Activated CD4-positive, alpha-beta memory T cell treated with anti-CD3 and anti-CD28 coated beads for 36 hours (primary cell): ENCODE measurements at regions of chr1 and their contacts with region 1.

Region 1: DNA sequence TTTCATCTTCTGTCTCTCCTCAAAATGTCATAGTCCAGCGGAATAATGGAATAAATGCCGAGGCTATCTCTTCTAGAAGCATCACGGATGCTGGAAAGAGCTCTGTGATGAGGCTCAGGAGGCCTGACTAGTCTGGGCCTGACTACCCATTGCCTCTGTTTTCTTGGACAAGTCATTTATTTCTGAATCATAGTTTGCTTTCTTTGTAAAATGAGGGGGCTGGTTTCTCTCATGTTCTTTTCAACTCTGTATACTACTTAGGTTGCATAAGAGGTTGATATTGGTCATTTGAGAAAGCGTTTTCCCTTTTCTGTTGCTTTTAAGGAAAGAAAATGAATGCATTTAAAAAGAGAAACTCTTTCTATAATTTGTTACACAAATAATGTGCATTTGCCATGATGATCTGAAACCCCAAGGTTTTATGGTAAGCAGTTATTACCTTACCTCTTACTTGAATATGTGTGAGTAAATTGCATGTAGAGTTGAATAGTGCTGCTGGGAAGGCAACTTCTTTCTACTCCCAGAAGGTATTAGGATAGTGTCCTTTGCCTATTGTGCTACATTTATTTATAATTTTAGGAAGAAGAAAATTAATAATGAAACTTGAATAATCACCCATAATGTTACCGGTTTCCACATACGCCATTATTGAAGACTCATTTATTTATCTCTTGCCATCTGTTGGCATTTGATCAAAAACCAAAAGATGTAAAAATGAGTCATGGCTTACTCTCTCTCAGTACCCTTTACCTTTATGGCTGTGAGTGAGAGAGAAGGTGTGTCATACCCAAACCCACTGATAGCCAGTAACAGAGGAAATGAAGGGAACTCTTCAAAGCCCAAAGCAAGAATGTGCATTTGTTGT is 179.1 kb downstream of the FASLG start:
- DNase-seq: peak; percentile 15
- H3K4me3 Mint-ChIP-seq: no peak overlapping the region
- H3K27ac Mint-ChIP-seq: no peak overlapping the region
- H3K4me1 Mint-ChIP-seq: peaks cover 27% of the 10 kb centered on the region
- H3K27me3 Mint-ChIP-seq: peaks cover 33% of the 10 kb centered on the region

Region 2: GRCh38 chr1:172699111-172699510 is 138.9 kb before region 1 on chr1:
- CTCF ChIA-PET with region 1: no interaction called
- POLR2A ChIA-PET with region 1: no interaction called
- intact Hi-C with region 1: loop called (anchors 1 kb)
- DNase-seq: peak; percentile 86
- H3K4me3 Mint-ChIP-seq: peak overlapping the region; percentile 14
- H3K27ac Mint-ChIP-seq: peak overlapping the region; percentile 88
- H3K4me1 Mint-ChIP-seq: peaks cover 50% of the 10 kb centered on the region
- H3K27me3 Mint-ChIP-seq: no peaks in the 10 kb centered on the region

Region 3: GRCh38 chr1:172795741-172796140 is 42.3 kb before region 1 on chr1:
- CTCF ChIA-PET with region 1: no interaction called
- POLR2A ChIA-PET with region 1: no interaction called
- intact Hi-C with region 1: no loop called
- DNase-seq: no peak
- H3K4me3 Mint-ChIP-seq: no peak overlapping the region
- H3K27ac Mint-ChIP-seq: no peak overlapping the region
- H3K4me1 Mint-ChIP-seq: no peaks in the 10 kb centered on the region
- H3K27me3 Mint-ChIP-seq: peaks cover 3% of the 10 kb centered on the region

Region 4: GRCh38 chr1:172818841-172819527 is 19.1 kb before region 1 on chr1:
- CTCF ChIA-PET with region 1: no interaction called
- POLR2A ChIA-PET with region 1: no interaction called
- intact Hi-C with region 1: loop called (anchors 1 kb)
- DNase-seq: peak; percentile 69
- H3K4me3 Mint-ChIP-seq: peak overlapping the region; percentile 4
- H3K27ac Mint-ChIP-seq: peak overlapping the region; percentile 63
- H3K4me1 Mint-ChIP-seq: peaks cover 24% of the 10 kb centered on the region
- H3K27me3 Mint-ChIP-seq: peaks cover 11% of the 10 kb centered on the region

Region 5: GRCh38 chr1:172883107-172883791 is 45.2 kb after region 1 on chr1:
- CTCF ChIA-PET with region 1: no interaction called
- POLR2A ChIA-PET with region 1: no interaction called
- intact Hi-C with region 1: loop called (anchors 1 kb)
- DNase-seq: peak; percentile 48
- H3K4me3 Mint-ChIP-seq: no peak overlapping the region
- H3K27ac Mint-ChIP-seq: no peak overlapping the region
- H3K4me1 Mint-ChIP-seq: peaks cover 15% of the 10 kb centered on the region
- H3K27me3 Mint-ChIP-seq: peaks cover 33% of the 10 kb centered on the region

Region 6: DNA sequence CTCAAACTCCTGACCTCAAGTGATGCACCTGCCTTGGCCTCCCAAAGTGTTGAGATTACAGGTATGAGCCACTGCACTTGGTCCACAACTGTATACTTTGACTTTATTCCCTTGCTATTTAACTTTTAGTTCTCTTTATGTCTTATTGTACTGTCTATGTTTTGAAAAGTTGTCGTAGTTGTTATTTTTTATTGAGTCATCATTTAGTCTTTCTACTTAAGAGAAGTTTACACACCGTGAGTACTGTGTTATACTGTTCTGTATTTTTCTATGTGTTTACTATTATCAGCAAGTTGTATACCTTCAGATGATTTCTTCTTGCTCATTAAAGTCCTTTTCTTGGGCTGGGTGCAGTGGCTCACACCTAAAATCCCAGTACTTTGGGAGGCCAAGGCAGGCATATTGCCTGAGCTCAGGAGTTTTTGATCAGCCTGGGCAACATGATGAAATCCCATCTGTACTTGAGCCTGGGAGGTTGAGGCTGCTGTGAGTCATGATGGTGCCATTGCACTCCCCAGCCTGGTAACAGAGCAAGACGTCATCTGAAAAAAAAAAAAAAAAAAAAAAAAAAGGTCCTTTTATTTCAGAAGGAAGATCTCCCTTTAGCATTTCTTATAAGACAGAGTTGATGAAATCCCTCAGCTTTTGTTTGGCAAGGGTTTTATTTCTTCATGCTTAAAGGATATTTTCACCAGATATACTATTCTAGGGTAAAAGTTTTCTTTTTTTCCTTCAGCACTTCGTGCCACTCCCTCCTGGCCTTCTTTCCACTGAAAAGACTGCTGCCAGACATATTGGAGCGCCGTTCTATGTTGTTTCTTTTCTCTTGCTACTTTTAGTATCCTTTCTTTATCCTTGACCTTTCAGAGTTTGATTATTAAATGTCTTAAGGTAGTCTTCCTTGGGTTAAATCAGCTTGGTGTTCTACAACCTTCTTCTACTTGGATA is 165.1 kb after region 1 on chr1:
- CTCF ChIA-PET with region 1: no interaction called
- POLR2A ChIA-PET with region 1: no interaction called
- intact Hi-C with region 1: no loop called
- DNase-seq: no peak
- H3K4me3 Mint-ChIP-seq: no peak overlapping the region
- H3K27ac Mint-ChIP-seq: no peak overlapping the region
- H3K4me1 Mint-ChIP-seq: peaks cover 10% of the 10 kb centered on the region
- H3K27me3 Mint-ChIP-seq: no peaks in the 10 kb centered on the region

Region 7: GRCh38 chr1:173297798-173298391 is 459.8 kb after region 1 on chr1:
- CTCF ChIA-PET with region 1: no interaction called
- POLR2A ChIA-PET with region 1: no interaction called
- intact Hi-C with region 1: loop called (anchors 2 kb)
- DNase-seq: peak; percentile 69
- H3K4me3 Mint-ChIP-seq: no peak overlapping the region
- H3K27ac Mint-ChIP-seq: no peak overlapping the region
- H3K4me1 Mint-ChIP-seq: peaks cover 39% of the 10 kb centered on the region
- H3K27me3 Mint-ChIP-seq: peaks cover 1% of the 10 kb centered on the region